ENCODE measurements at regions of chrX and their contacts with region 1.

Region 1: GRCh38 chrX:48021026-48021900 is 14.5 kb downstream of the SPACA5 start:
- DNase-seq: peak; percentile 32 to 60
- ATAC-seq: peak; percentile 90
- H3K4me3 ChIP-seq: peak overlapping the region; percentile 61 to 68 (median 64)
- H3K27ac ChIP-seq: peak overlapping the region; percentile 82 to 91 (median 86)
- H3K4me1 ChIP-seq: peaks cover 0 to 4% of the 10 kb centered on the region in 2 donors
- H3K27me3 ChIP-seq: no peaks in the 10 kb centered on the region
- CTCF ChIP-seq: no peak
- POLR2A ChIP-seq: no peak

Region 2: DNA sequence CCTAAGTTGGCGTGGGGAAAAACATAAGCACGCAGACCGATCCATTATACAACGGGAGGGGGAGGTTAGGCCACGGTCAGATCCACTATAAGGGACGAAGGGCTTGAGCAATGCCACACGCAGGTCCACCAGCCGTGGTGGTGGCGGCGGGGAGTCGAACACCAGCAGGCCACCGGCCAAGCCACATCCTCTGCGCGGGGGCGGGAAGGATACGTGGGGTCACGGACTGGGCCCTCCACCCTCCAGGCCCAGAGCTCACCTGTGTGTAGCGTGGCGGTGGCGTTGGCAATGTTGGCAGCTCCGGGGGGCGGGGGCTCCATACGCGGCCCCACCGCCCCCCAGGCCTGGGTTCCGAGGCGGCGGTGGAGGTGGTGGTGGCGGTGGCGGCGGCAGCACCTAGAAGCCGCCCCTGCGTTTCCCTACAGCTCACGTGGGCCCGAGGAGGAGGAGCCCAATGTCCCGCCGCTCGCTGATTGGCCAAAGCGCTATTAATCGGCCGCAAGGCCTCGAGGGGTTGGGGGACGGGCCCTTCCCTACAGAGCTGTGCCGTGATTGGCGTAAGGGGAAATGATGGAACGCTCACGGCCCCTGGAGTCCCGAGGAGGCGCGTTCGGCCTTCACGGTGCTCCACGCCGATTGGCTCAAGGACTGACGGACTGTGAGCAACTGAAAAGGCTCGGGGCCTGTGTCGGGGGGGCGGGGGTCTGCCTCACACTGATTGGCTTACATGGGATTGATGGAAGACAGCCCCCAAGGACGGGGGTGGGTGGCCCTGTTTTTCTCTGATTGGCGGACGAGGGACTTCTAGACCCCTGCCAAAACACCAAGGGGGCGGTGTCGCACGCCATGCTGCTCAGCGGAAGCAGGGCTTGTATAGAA is 370.9 kb before region 1 on chrX and contains the start of gene ELK1:
- in situ Hi-C with region 1: no loop called
- intact Hi-C with region 1: loop called (anchors 10 kb)
- DNase-seq: peak; percentile 95 to 97
- ATAC-seq: peak; percentile 92 to 95
- H3K4me3 ChIP-seq: peak within 1 kb of the TSS; percentile 66 to 79 (median 70)
- H3K27ac ChIP-seq: peak within 1 kb of the TSS; percentile 85 to 94 (median 92)
- H3K4me1 ChIP-seq: peaks cover 5 to 8% of the 10 kb centered on the region in 2 donors
- H3K27me3 ChIP-seq: no peaks in the 10 kb centered on the region
- CTCF ChIP-seq: no peak
- POLR2A ChIP-seq: peak; percentile 72 to 73
- total RNA-seq, gene ELK1: 35.0 to 65.6 (median 58.8) TPM

Region 3: DNA sequence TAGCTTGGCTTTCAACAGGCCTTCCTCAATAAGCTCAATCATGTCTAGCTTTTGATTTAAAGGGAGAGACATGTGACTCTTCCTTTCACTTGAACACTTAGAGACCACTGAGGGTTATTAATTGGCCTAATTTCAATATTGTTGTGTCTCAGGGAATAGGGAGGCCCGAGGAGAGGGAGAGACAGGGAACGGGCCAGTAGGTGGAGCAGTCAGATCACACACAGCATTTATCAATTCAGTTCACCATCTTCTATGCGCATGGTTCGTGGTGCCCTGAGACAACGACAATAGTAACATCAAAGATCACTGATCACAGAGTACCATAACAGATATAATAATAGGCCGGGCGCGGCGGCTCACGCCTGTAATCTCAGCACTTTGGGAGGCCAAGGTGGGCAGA is 166.8 kb before region 1 on chrX:
- in situ Hi-C with region 1: loop called in 1 of 4 experiments (anchors 25 kb)
- intact Hi-C with region 1: loop called (anchors 5 kb)
- DNase-seq: no peak
- ATAC-seq: no peak
- H3K4me3 ChIP-seq: no peak overlapping the region
- H3K27ac ChIP-seq: no peak overlapping the region
- H3K4me1 ChIP-seq: no peaks in the 10 kb centered on the region
- H3K27me3 ChIP-seq: no peaks in the 10 kb centered on the region
- CTCF ChIP-seq: peak in 3 of 5 experiments; percentile 13 to 29 (median 20)
- POLR2A ChIP-seq: no peak

Measured in gastrocnemius medialis (tissue), 4 donors.